Prostate gland (tissue), 2 donors: ENCODE measurements at regions of chr4 and their contacts with region 1.

Region 1: GRCh38 chr4:118772081-118772766 is 63.7 kb downstream of the SEC24D start:
- DNase-seq: no peak
- H3K4me3 ChIP-seq: no peak overlapping the region
- H3K27ac ChIP-seq: peak overlapping the region; percentile 59 to 67
- H3K4me1 ChIP-seq: no peaks in the 10 kb centered on the region
- H3K27me3 ChIP-seq: no peaks in the 10 kb centered on the region
- CTCF ChIP-seq: peak; percentile 17 to 78 (median 62)
- POLR2A ChIP-seq: no peak

Region 2: DNA sequence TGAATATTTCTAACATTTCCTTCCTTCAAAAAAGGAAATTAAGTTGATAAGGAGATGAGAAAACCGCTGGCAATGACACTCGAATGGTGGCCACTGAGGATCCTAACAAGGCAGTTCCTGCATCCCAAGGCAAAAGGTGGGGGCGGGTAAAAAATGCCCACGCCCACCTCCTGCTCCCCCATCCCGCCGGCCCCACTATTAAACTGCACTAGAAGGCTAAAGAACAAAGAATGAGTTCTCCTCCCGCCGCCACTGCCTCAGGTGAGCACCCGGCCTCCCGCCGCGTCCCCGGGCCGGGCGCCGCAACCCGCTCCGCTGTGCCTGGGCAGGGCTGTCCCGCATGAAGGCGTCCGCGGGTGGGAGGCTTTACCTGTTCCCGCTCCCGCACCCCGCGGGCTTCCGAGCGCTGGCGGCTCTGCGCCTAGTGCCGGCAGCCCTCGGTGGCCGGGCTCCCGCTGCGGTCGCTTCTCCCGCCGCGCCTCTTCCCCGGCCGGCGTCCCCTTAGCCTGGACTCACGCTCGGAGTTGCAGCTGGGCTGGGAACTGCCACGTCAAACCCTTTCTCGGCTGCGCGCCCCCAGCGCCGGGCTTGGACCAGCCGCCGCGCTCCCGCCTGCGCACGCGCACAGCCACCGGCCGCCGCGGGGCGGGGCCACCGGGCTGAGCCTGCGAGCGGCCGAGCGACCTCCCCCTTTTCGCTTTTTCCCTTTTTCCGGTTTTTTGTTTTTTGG is 63.5 kb after region 1 on chr4 and contains the start of gene SEC24D:
- intact Hi-C with region 1: loop called (anchors 5 kb)
- DNase-seq: peak; percentile 80
- H3K4me3 ChIP-seq: peak within 1 kb of the TSS; percentile 99
- H3K27ac ChIP-seq: peak within 1 kb of the TSS; percentile 96
- H3K4me1 ChIP-seq: no peaks in the 10 kb centered on the region
- H3K27me3 ChIP-seq: no peaks in the 10 kb centered on the region
- CTCF ChIP-seq: peak in 2 of 4 experiments; percentile 23
- POLR2A ChIP-seq: peak; percentile 89
- total RNA-seq, gene SEC24D: 31.5 to 34.9 TPM

Region 3: DNA sequence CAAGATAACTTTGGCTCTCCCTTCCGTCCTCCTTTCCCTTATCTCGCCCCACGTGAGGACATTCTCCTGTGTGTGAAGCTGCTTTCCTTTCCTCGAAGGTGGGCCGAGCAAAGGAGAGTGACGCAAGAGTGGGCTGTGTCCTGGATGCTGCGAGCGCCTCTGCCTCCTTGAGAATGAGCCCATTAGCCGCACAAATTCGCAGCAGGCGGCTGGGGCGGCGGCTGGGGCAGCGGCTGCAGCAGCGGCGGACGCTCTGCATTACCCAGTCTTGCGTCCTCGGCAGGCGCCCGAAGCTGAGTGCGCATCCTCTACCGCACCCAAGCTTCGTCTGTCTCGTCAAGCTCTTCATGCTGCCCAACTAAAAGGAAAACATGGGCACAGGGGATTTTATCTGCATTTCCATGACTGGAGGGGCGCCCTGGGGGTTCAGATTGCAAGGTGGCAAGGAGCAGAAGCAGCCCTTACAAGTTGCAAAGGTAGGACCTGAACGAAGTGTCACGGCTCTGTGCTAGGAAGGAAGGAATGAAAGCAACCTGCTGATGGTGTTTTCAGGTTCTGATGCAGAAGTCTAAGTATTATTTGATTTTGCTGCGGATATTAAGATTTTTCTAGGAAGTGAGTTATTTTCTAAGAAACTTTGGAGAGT is 116.6 kb after region 1 on chr4 and contains the start of gene SYNPO2:
- intact Hi-C with region 1: loop called (anchors 5 kb)
- DNase-seq: peak; percentile 79
- H3K4me3 ChIP-seq: peak within 1 kb of the TSS; percentile 26 to 37
- H3K27ac ChIP-seq: peak within 1 kb of the TSS; percentile 41 to 78
- H3K4me1 ChIP-seq: no peaks in the 10 kb centered on the region
- H3K27me3 ChIP-seq: no peaks in the 10 kb centered on the region
- CTCF ChIP-seq: peak in 1 of 4 experiments; percentile 1
- POLR2A ChIP-seq: peak; percentile 76
- total RNA-seq, gene SYNPO2: 131 to 181 TPM

Region 4: DNA sequence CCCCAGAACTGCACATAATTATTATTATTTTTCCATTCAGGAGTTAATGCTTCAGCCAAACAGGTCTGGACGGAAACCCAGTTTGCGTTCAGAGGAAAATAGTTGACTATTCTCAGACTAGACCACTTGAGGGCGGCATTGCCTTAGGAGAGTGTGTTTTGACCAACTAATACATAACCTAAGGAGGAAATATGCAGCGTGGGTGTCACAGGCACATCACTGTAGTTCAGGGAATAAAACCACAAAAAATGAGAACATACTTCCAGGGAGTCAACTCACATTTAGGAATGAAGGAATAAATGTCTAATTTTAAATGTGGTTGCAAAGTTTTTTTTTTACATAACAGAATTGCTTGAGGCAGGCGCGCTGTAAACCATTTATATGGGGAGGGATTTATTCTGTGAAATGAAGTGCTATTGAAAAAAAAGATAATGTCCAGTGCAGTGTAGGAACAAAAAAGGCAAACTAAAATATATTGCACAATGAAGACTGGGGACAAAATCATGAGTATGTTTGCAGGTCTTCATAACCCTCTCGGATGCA is 209.7 kb after region 1 on chr4:
- intact Hi-C with region 1: loop called (anchors 5 kb)
- DNase-seq: peak; percentile 65
- H3K4me3 ChIP-seq: no peak overlapping the region
- H3K27ac ChIP-seq: peak overlapping the region; percentile 27 to 39
- H3K4me1 ChIP-seq: no peaks in the 10 kb centered on the region
- H3K27me3 ChIP-seq: no peaks in the 10 kb centered on the region
- CTCF ChIP-seq: peak; percentile 46 to 87 (median 68)
- POLR2A ChIP-seq: no peak